ENCODE measurements at regions of chr12 and their contacts with region 1.

Region 1: DNA sequence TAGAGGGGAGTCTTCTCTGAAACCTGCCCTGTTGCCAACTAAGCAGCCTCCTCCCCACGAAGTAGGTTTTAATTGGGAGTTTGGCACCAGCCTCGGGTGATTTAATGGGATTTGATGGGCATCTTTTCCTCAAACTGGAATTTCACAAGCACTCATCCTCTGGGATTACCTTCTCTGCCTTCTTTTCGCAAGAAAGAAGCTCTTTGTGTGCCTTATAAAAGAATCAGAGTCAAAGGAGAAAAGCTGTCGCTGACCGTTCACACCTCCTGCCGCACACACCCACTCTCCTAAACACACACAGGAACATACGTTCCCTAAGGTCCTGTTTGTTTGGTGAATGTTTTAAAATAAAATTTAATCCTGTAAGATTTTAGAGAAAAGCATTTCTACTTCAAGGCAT is 84.0 kb downstream of the PRMT8 start:
- DNase-seq: no peak

Region 2: GRCh38 chr12:3601461-3602145 is 26.6 kb after region 1 on chr12:
- intact Hi-C with region 1: loop called in 1 of 2 experiments (anchors 1 kb)
- DNase-seq: peak; percentile 69